ENCODE measurements at regions of chr6 and their contacts with region 1.

Region 1: DNA sequence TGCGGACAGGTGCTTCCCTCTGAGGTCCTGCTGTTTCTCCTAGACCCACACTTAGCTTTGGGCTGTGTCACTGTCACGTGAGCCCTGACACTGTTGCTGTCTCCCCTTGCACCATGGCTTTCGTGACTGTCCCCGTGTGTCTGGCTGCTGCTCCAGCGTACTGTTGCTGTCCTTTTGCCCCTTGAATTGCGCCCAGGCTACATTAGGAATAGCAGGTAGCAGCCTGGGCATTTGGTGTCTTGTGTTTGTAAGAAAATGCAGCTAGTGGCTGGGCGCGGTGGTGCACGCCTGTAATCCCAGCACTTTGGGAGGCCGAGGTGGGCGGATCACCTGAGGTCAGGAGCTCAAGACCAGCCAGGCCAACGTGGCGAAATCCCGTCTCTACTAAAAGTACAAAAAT is 46.1 kb downstream of the GMPR start:
- DNase-seq: no peak
- ATAC-seq: no peak
- H3K4me3 ChIP-seq: no peak overlapping the region
- H3K4me3 Mint-ChIP-seq: no peak overlapping the region
- H3K27ac ChIP-seq: no peak overlapping the region
- H3K27ac Mint-ChIP-seq: no peak overlapping the region
- H3K4me1 ChIP-seq: no peaks in the 10 kb centered on the region
- H3K4me1 Mint-ChIP-seq: no peaks in the 10 kb centered on the region
- H3K27me3 ChIP-seq: peaks cover 0 to 8% of the 10 kb centered on the region in 2 experiments
- H3K27me3 Mint-ChIP-seq: peaks cover 2 to 3% of the 10 kb centered on the region in 2 donors

Region 2: GRCh38 chr6:16166871-16167608 is 117.4 kb before region 1 on chr6:
- CTCF ChIA-PET with region 1: no interaction called
- POLR2A ChIA-PET with region 1: interaction called in 1 of 2 experiments, 12 read pairs
- DNase-seq: no peak
- ATAC-seq: no peak
- H3K4me3 ChIP-seq: no peak overlapping the region
- H3K4me3 Mint-ChIP-seq: no peak overlapping the region
- H3K27ac ChIP-seq: no peak overlapping the region
- H3K27ac Mint-ChIP-seq: no peak overlapping the region
- H3K4me1 ChIP-seq: peaks cover 2 to 11% of the 10 kb centered on the region in 2 experiments
- H3K4me1 Mint-ChIP-seq: peaks cover 25 to 34% (median 28%) of the 10 kb centered on the region in 3 donors
- H3K27me3 ChIP-seq: no peaks in the 10 kb centered on the region
- H3K27me3 Mint-ChIP-seq: peaks cover 0 to 6% of the 10 kb centered on the region in 2 donors

Measured in T-cell (primary cell).